Left colon (tissue), 2 donors: ENCODE measurements at regions of chr10 and their contacts with region 1.

Region 1: DNA sequence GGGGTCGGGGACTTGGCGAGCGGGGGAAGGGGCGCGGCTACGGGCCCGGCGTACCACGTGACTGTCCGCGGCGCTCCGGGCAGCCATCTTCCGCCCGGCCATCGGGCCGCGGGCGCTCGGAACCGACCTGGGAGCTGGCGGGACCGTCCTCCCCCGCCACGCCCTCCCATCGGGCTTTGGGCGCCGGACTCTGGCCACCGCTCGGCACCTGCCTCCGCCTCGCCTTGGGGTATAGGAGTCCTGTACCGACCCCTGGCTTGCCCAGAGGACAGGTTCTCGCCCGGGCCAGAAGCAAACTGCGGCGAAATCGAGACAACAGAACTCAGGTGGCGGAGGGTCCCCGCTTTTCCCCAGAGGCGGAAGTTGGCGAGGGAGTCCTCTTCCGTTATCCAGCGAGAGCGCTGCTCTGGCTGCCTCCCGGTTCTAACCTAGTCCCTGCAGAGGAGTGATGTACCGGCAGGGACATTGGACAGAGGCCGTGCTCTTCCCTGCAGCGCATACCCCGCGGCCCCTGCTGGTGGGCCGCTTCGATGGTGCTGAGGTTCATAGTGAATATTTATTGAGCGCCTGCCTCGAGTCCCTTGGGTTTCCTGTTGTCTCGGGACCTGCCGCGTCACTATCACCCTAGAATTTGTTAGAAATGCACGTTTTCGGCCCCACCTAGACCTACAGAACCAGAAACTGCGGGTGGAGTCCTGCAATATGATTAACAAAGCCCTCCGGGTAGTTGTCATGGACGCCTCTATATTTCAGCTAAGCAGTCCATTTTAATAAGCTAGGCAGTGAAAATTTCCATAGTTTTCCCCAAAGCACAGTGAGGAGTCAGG is 1.3 kb upstream of the SGMS1 start:
- DNase-seq: peak; percentile 80 to 87
- ATAC-seq: peak; percentile 73

Region 2: DNA sequence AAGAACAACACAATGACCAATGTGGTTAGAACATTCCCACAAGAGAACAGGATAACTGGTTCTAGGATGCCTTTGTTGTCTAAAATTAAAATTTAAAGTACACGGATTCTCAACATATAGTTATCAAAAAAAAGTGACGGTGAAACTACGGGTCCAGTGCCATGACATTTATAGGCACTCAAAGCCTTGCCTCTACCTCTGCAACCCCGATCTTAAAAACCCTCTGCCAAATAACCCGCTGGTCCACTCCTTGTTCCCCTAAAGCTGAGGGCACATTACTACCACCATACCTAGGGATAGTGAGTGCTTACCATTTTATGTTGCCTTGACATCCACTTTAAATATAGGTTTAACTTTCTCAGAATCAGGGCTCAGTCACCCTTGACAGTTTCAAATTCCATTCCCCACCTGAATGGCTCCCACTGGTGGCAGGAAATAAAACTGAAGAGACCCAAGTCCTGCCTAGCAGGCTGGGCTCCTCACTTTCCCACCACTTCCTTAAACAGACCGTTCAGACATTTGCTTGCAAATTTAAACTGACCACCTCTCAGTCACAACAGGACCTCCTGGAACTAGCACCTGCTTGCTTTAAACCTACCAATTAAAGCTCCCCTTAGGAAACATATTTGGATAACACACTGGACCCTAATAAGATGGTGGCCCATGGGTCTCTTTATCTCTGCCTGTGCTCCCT is 203.9 kb before region 1 on chr10:
- intact Hi-C with region 1: loop called in 1 of 2 experiments (anchors 10 kb)
- DNase-seq: peak; percentile 21 to 37
- ATAC-seq: peak; percentile 44

Region 3: DNA sequence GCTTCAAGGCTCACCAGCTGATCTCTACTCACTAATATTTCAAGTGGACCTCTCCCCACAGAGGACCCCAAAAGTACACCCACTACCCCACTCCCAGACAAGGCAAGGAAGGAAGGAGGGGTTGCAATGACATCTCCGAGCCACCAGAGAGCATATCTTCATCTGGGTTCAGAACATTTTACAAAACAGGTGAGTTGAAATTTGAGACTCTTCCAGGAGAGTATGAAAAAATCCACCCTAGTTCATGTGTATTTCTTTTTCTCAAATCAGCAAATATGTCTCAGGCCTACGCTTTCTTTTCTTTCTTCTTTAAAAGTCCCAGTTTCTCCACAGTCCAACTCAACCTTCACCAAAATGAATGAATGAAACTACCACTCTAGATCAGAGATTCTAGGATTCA is 63.3 kb before region 1 on chr10:
- intact Hi-C with region 1: loop called in 1 of 2 experiments (anchors 5 kb)
- DNase-seq: no peak
- ATAC-seq: peak; percentile 57

Region 4: GRCh38 chr10:50951365-50951764 is 326.3 kb after region 1 on chr10:
- intact Hi-C with region 1: no loop called
- DNase-seq: no peak
- ATAC-seq: no peak